ENCODE measurements at regions of chr10 and their contacts with region 1.

Region 1: DNA sequence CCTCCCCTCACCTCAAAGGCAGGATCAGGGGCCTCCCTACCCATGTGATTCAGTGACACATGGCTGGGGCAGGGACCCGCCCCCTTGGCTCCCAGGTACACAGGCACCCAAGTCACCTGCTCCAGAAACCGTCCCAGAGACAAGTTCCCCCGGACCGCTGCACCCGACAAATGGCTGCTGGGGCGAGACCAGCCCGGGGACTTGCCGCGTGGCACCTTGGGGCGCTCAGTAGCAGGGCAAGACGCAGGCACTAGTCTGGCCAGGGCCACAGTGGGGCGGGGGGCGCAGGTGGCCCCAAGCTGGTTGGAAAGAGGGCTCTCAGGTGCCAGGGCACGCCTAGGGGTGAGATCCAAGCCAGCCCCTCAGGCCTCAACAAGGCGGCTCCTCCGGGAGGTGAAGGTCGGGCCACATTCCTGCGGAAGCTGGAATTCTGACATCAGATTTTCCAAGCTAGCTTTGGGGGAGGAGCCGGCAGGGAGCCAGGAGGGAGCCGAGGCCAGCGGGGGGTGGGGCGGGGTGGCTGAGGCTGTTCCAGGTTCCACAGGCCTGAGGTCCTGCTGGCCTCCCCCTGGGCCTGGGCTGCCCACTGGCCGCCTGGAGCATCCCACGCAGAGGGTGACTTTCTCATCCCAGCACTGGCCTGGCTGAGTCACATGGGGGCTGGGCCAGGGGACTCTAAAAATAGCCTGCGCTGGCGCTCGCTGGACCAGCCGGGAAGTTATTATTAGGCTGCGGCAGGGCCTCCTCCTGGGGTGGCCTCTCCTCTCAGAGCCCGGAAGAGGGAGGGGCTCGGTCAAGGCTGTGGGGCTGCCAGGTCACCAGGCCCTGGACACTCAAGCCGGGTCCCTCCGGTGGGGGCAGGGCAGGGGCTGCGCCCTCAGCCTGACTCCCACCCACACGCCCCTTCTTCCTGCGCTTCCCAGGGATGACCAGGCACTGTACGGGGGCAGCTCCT is 20.5 kb upstream of the INPP5A start:
- DNase-seq: peak; percentile 14
- ATAC-seq: no peak
- H3K4me3 Mint-ChIP-seq: no peak overlapping the region
- H3K27ac Mint-ChIP-seq: no peak overlapping the region
- H3K4me1 Mint-ChIP-seq: peaks cover 4% of the 10 kb centered on the region
- H3K27me3 Mint-ChIP-seq: no peaks in the 10 kb centered on the region
- CTCF ChIP-seq: no peak

Region 2: DNA sequence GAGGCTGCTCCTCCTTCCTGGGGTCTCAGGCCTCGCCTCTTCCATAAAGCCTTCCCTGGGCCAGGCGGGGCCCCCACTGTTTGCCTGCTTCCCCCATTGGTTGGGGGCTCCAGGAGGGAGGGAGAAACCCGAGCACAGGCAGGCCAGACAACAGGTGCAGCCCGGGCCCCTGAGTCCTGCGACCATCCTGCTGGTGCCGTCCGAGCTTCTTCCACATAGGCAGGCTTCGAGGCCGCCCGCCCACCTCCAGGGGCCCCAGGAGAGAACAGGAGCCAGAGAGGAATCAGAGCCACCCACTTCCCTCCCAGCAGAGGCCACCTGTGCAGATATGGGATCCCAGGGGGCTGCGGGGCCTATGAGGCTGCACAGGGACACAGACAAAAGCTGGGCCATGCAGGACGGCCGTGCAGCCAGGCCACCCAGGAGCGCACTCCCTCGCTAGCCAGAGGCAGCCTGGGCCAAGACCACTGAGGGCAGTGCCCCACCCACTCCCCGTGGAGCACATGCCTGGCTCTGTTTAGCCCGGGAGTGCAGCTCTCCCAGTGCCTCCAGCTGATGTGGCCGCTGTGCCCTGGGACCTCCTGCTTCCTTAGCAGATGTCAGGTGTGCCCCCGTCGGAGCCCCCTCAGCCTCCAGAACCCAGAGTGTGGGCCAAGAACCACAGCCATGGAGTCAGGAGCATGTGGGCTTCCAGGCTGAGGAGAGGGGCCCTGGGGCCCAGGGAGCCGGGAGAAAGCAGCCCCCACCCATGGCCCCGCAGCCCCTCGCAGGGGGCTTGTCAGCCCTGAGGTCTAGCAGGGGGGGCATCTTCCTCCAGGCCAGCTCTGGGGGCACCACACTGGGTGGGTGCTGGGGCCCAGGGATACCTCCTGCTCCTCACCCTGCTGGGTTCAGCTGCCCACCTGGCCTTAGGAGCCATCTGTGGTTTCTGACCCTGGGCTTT is 39.4 kb before region 1 on chr10:
- CTCF ChIA-PET with region 1: no interaction called
- POLR2A ChIA-PET with region 1: no interaction called
- intact Hi-C with region 1: loop called (anchors 5 kb)
- DNase-seq: no peak
- ATAC-seq: no peak
- H3K4me3 Mint-ChIP-seq: no peak overlapping the region
- H3K27ac Mint-ChIP-seq: no peak overlapping the region
- H3K4me1 Mint-ChIP-seq: no peaks in the 10 kb centered on the region
- H3K27me3 Mint-ChIP-seq: peaks cover 15% of the 10 kb centered on the region
- CTCF ChIP-seq: no peak

Region 3: DNA sequence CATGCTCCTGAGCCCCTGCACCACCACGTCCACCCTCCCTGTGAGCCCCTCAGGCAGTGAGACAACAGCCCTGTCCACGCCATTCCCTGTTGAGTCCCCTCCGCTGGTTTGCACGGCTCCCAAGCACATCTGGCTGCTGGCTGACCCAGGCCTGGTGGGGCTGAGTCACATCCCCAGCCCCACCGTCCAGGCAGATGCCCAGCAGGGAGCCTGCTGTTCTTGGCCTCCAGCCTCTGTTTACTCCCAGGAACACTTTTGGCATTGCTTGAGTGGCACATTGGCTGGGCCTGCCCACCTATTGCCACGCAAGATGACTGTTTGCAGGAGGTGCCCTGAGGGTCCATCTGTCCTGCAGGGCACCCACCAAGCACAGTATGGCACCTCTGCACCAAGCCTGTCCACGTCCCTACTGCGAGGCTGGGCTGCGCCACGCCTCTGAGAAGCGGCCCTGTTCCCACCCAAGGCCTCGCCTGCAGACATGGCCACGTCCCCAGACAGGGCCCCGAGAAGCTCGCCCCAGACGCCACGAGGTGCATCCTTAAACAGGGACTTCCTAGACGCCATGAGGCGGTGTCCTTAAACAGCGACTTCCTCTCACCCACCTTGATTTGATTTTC is 27.9 kb before region 1 on chr10:
- CTCF ChIA-PET with region 1: no interaction called
- POLR2A ChIA-PET with region 1: no interaction called
- intact Hi-C with region 1: no loop called
- DNase-seq: no peak
- ATAC-seq: no peak
- H3K4me3 Mint-ChIP-seq: no peak overlapping the region
- H3K27ac Mint-ChIP-seq: no peak overlapping the region
- H3K4me1 Mint-ChIP-seq: no peaks in the 10 kb centered on the region
- H3K27me3 Mint-ChIP-seq: no peaks in the 10 kb centered on the region
- CTCF ChIP-seq: no peak

Region 4: DNA sequence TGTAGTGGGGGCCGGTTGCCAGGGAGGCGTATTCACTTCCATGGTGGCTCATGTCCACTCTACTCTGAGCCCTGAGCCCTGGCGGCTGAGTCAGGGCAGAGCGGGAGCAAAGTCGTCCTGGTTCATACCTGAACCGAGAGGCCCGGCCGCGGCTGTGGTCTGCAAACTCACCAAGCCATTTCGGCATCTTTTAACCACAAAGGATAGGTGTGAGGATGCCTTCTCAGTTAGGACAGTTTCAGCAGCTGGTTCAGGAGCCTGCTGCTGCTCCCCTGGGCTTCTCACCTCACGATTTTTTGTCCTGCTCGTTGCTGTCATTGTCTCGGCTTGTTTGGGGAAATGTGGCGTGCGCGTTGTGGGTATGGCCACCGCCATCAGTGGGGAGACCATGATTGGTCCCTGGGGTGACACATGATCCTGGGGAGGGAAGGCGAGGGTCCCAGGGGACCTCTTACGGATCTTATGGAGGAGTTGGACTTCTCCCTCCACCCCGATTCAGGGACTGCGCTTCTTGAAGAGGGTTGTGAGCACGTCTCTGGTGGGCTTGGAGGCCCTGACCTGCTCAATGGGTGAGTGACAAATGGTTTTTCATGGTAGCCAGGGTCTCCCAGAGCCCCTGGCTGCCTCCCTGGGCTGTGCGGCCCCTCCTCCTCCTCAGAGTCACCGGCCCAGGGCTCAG is 46.9 kb after region 1 on chr10:
- CTCF ChIA-PET with region 1: no interaction called
- POLR2A ChIA-PET with region 1: no interaction called
- intact Hi-C with region 1: no loop called
- DNase-seq: no peak
- ATAC-seq: peak; percentile 19
- H3K4me3 Mint-ChIP-seq: peak overlapping the region; percentile 24
- H3K27ac Mint-ChIP-seq: no peak overlapping the region
- H3K4me1 Mint-ChIP-seq: peaks cover 58% of the 10 kb centered on the region
- H3K27me3 Mint-ChIP-seq: no peaks in the 10 kb centered on the region
- CTCF ChIP-seq: no peak

Measured in activated B cell treated with CpG ODN at 0.5 μM for 24 hours (primary cell).